ENCODE measurements at regions of chr3 and their contacts with region 1.

Region 1: DNA sequence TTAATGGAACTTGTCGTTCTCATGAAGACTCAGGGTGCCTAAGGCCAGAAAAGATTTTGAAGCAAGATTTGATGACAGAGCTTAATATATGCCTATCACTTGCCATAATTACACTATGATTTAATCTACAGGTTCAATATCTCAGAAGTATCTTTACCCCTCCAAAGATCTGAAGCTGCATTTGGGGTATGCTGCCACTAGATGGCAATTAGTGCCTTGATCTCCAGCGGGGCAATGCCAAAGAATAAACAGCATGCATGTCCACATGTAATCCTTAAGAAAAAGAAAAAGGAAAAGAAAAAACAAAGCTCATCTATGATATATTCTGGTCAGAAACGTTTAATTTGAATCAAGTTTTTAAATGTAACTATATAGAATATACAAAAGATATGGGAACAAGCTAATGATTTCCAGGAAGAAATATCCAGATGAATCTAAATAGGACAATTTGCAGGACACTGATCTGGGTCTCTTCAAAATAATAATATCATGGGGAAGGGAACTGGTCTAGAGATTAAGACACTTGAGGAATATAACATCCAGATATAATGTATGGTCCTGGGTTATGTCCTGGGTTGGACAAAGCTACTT is 55.0 kb upstream of the SOX14 start:
- DNase-seq: peak; percentile 46
- H3K4me3 Mint-ChIP-seq: no peak overlapping the region
- H3K27ac Mint-ChIP-seq: no peak overlapping the region
- H3K4me1 Mint-ChIP-seq: no peaks in the 10 kb centered on the region
- H3K27me3 Mint-ChIP-seq: peaks cover 54% of the 10 kb centered on the region
- CTCF ChIP-seq: peak; percentile 65

Region 2: DNA sequence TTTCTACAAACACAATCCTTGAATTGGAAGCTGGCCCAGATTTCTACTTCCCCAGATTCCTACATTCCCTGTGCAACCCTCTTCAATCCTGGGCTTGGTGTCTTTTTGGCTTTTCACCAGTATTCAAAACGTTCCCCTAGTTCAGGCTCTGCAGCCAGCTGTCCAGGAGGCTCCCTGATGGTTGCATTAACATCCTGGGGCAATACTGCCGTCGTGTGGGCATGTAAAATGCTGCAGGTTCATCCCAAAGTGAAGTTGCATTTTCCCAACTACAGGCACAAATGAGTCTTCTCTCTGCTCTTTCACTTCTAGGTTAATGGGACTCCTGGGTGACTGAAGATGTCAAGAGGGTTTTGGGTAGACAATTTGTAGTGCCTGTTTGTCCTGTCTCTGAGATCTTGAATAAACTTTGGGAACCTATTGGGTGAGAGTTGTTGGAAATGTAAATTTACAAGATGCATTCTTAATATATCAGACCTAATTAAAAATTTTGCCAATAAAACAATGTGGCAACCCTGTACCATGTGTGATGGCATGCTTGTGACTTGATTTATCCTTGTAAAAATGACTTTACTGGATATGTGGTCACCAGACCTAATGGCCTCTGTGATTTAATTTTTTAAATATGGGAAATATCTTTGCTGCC is 83.6 kb after region 1 on chr3:
- CTCF ChIA-PET with region 1: interaction called, 3 read pairs
- POLR2A ChIA-PET with region 1: no interaction called
- intact Hi-C with region 1: loop called (anchors 1 kb)
- DNase-seq: peak; percentile 49
- H3K4me3 Mint-ChIP-seq: no peak overlapping the region
- H3K27ac Mint-ChIP-seq: no peak overlapping the region
- H3K4me1 Mint-ChIP-seq: no peaks in the 10 kb centered on the region
- H3K27me3 Mint-ChIP-seq: peaks cover 74% of the 10 kb centered on the region
- CTCF ChIP-seq: peak; percentile 52

Region 3: GRCh38 chr3:137845194-137845593 is 136.1 kb after region 1 on chr3:
- CTCF ChIA-PET with region 1: no interaction called
- POLR2A ChIA-PET with region 1: no interaction called
- intact Hi-C with region 1: no loop called
- DNase-seq: no peak
- H3K4me3 Mint-ChIP-seq: no peak overlapping the region
- H3K27ac Mint-ChIP-seq: no peak overlapping the region
- H3K4me1 Mint-ChIP-seq: no peaks in the 10 kb centered on the region
- H3K27me3 Mint-ChIP-seq: peaks cover 88% of the 10 kb centered on the region
- CTCF ChIP-seq: no peak

Region 4: DNA sequence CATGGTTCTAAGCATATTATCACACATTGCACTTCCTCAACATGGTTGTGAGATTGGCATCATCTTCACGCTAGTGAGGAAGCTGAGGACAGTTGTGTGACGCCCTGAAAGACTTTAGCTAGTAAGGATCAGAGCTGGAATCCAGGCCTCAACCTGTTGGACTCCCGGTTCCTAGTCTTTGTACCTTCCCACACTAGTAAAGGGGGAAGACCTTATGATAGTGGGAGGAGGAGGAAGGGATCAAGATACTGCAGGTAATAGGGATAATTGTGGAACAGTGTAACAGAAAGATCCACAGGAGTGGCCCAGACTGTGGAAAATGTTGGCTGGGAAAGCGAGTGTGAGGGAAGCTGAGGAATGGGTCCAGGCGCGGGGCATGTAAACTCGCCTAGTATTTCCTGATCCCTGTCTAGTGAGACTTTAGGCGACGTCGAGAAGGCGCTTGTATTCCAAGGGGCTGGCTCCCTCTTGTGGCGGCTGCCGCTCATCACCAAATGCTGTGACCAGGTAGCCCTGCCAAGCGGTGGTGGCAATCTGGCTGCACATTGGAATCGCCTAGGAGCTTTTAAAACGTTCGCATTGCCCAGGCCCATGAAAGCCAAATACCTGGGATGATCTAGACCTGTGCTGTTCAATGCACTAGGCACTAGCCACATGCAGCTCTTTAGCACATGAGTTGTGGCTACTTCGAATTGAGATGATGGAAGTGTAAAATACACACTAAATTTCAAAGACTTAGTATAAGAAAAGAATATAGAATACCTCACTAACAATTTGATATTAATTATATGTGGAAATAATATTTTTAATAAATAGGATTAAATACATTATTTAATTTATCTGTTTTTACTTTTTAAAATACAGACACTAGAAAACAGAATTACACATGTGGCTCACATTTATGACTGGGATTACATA is 262.1 kb after region 1 on chr3:
- CTCF ChIA-PET with region 1: interaction called, 13 read pairs
- POLR2A ChIA-PET with region 1: no interaction called
- intact Hi-C with region 1: loop called (anchors 1 kb)
- DNase-seq: peak; percentile 80
- H3K4me3 Mint-ChIP-seq: no peak overlapping the region
- H3K27ac Mint-ChIP-seq: no peak overlapping the region
- H3K4me1 Mint-ChIP-seq: no peaks in the 10 kb centered on the region
- H3K27me3 Mint-ChIP-seq: no peaks in the 10 kb centered on the region
- CTCF ChIP-seq: peak; percentile 88

Region 5: DNA sequence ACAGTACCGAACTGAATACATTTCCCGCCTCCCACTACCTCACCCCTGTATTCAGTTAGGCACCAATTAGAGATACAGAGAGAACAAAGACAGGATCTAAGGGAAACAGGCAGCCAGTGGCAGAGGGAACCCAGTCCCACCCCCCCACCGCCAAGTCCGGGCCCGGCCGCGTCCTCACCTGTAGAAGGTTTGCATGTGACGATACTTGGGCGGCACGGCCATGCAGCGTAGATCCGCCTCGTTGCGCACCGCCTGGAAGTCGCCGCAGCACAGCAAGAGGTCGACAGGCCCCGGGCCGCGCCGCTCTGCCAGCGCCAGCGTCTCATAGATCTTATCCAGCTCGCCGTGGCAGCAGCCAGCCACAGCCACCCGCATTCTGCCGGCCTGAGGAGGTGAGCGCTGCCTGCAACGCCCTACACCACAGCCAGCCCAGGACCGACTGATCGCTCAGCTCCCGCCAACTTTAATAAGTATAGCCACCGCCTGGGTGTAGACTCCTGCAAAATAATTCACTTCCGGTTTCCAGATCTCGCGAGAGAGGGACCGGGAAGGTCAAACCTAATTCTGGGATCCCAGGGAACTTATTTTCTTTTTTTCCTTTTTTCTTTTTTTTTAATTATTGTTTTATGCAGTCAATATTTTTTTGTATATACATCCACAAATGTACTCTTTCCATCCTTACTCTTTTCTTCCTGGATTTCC is 465.5 kb after region 1 on chr3 and contains the start of gene DBR1:
- CTCF ChIA-PET with region 1: no interaction called
- POLR2A ChIA-PET with region 1: no interaction called
- intact Hi-C with region 1: no loop called
- DNase-seq: peak; percentile 90
- H3K4me3 Mint-ChIP-seq: peak within 1 kb of the TSS; percentile 89
- H3K27ac Mint-ChIP-seq: peak within 1 kb of the TSS; percentile 93
- H3K4me1 Mint-ChIP-seq: peaks cover 12% of the 10 kb centered on the region
- H3K27me3 Mint-ChIP-seq: peaks cover 11% of the 10 kb centered on the region
- CTCF ChIP-seq: no peak
- total RNA-seq, gene DBR1: 12.4 and 13.3 TPM in 2 replicates

Measured in MCF 10A (cell line).